ENCODE measurements at regions of chr12 and their contacts with region 1.

Region 1: GRCh38 chr12:9707864-9708808 is 24.8 kb downstream of the CLECL1 start:
- DNase-seq: peak; percentile 35 to 79 (median 72)
- ATAC-seq: peak; percentile 92
- H3K4me3 ChIP-seq: peak overlapping the region; percentile 46
- H3K4me3 Mint-ChIP-seq: peak overlapping the region; percentile 56 to 82 (median 73)
- H3K27ac ChIP-seq: peak overlapping the region; percentile 66
- H3K27ac Mint-ChIP-seq: peak overlapping the region; percentile 80 to 98 (median 95)
- H3K4me1 ChIP-seq: peaks cover 30 to 31% of the 10 kb centered on the region in 2 donors
- H3K4me1 Mint-ChIP-seq: peaks cover 34 to 86% (median 81%) of the 10 kb centered on the region in 7 donors
- H3K27me3 ChIP-seq: no peaks in the 10 kb centered on the region
- H3K27me3 Mint-ChIP-seq: no peaks in the 10 kb centered on the region

Region 2: GRCh38 chr12:9464408-9464807 is 243.7 kb before region 1 on chr12:
- CTCF ChIA-PET with region 1: interaction called, 4 read pairs
- POLR2A ChIA-PET with region 1: no interaction called
- intact Hi-C with region 1: loop called in 1 of 2 experiments (anchors 10 kb)
- DNase-seq: no peak
- ATAC-seq: no peak
- H3K4me3 ChIP-seq: no peak overlapping the region
- H3K4me3 Mint-ChIP-seq: no peak overlapping the region
- H3K27ac ChIP-seq: no peak overlapping the region
- H3K27ac Mint-ChIP-seq: no peak overlapping the region
- H3K4me1 ChIP-seq: no peaks in the 10 kb centered on the region
- H3K4me1 Mint-ChIP-seq: peaks cover 0 to 14% (median 9%) of the 10 kb centered on the region in 7 donors
- H3K27me3 ChIP-seq: no peaks in the 10 kb centered on the region
- H3K27me3 Mint-ChIP-seq: peaks cover 0 to 6% (median 0%) of the 10 kb centered on the region in 5 donors

Region 3: DNA sequence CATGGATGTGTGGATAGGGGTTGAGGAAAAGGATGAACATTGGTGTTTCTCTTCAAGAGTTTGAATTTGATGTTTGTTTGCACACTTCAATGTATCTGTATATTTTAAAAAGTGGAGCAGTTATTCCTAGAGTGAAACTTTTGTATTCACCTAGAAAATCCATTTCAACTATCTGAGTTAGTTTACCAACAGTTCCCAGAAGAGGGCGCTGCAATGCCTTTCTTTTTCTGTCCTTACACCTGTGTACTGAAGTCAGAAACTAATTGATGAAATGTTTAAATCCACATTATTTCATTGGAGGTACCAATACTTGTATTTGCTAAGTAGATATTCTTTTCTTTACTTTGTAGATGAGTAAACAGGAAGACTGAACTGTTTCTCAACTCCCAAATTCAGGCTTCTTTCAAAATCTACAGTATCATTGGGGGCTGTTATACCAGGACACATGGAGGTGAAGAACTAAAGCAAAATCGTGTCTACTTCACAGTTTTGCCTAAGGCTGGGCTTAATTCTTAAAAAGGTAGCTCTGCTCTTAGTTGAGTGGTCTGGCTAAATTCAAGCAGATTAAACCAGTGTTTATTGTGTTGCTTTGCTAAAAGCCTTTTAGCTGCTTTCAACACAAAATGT is 73.8 kb before region 1 on chr12:
- CTCF ChIA-PET with region 1: interaction called, 89 read pairs
- POLR2A ChIA-PET with region 1: interaction called, 46 read pairs
- intact Hi-C with region 1: loop called (anchors 1 kb)
- DNase-seq: peak; percentile 45 to 84 (median 75)
- ATAC-seq: peak; percentile 90
- H3K4me3 ChIP-seq: no peak overlapping the region
- H3K4me3 Mint-ChIP-seq: peak overlapping the region in 9 of 10 donors; percentile 15 to 78 (median 73)
- H3K27ac ChIP-seq: peak overlapping the region; percentile 40
- H3K27ac Mint-ChIP-seq: peak overlapping the region; percentile 78 to 97 (median 91)
- H3K4me1 ChIP-seq: peaks cover 23 to 33% of the 10 kb centered on the region in 2 donors
- H3K4me1 Mint-ChIP-seq: peaks cover 24 to 80% (median 66%) of the 10 kb centered on the region in 7 donors
- H3K27me3 ChIP-seq: no peaks in the 10 kb centered on the region
- H3K27me3 Mint-ChIP-seq: peaks cover 0 to 20% (median 0%) of the 10 kb centered on the region in 5 donors

Region 4: GRCh38 chr12:9647825-9648700 is 60.1 kb before region 1 on chr12:
- CTCF ChIA-PET with region 1: interaction called, 15 read pairs
- POLR2A ChIA-PET with region 1: interaction called, 104 read pairs
- intact Hi-C with region 1: loop called (anchors 1 kb)
- DNase-seq: peak; percentile 77 to 97 (median 92)
- ATAC-seq: peak; percentile 81
- H3K4me3 ChIP-seq: peak overlapping the region; percentile 67
- H3K4me3 Mint-ChIP-seq: peak overlapping the region; percentile 93 to 100 (median 98)
- H3K27ac ChIP-seq: peak overlapping the region; percentile 92
- H3K27ac Mint-ChIP-seq: peak overlapping the region; percentile 92 to 100 (median 98)
- H3K4me1 ChIP-seq: peaks cover 29 to 42% of the 10 kb centered on the region in 2 donors
- H3K4me1 Mint-ChIP-seq: peaks cover 32 to 65% (median 60%) of the 10 kb centered on the region in 7 donors
- H3K27me3 ChIP-seq: no peaks in the 10 kb centered on the region
- H3K27me3 Mint-ChIP-seq: peaks cover 0 to 5% (median 0%) of the 10 kb centered on the region in 5 donors

Region 5: DNA sequence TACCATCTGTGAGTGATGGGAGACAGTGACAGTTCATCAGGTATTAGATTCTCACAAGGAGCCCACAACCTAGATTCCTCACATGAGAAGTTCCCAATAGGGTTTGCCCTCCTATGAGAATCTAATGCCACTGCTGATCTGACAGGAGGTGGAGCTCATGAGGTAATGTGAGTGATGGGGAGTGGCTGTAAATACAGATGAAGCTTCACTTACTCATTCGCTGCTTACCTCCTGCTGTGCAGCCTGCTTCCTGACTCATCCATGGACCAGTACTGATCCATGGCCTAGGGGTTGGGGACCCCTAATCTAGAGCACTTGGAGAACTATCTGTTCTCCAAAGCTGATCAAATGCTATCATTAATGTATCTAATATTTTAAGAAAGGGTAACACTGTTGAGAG is 20.9 kb before region 1 on chr12:
- CTCF ChIA-PET with region 1: interaction called, 6 read pairs
- POLR2A ChIA-PET with region 1: interaction called, 16 read pairs
- intact Hi-C with region 1: no loop called
- DNase-seq: no peak
- ATAC-seq: no peak
- H3K4me3 ChIP-seq: no peak overlapping the region
- H3K4me3 Mint-ChIP-seq: peak overlapping the region in 8 of 10 donors; percentile 21 to 89 (median 34)
- H3K27ac ChIP-seq: peak overlapping the region; percentile 40
- H3K27ac Mint-ChIP-seq: peak overlapping the region in 7 of 9 donors; percentile 5 to 83 (median 67)
- H3K4me1 ChIP-seq: peaks cover 26 to 41% of the 10 kb centered on the region in 2 donors
- H3K4me1 Mint-ChIP-seq: peaks cover 34 to 89% (median 77%) of the 10 kb centered on the region in 7 donors
- H3K27me3 ChIP-seq: no peaks in the 10 kb centered on the region
- H3K27me3 Mint-ChIP-seq: no peaks in the 10 kb centered on the region

Region 6: DNA sequence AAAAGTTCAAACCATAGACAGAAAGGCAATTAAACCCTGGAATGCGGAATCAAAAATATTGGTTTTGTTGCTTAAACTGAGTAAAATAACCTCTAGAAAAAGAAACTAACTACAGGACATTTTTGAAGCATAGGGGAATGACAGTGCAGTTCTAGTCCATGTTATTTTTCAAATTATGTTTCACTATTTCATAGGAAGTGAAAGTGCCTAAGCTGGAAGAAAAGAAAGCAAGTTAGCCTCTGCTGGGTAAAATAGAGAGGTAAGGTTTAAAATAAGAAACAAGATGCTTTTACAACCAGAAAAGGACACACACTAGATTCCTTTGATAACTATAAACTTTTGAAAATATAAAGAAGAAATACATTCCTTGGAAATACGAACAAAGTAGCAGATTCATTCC is 23.7 kb after region 1 on chr12:
- CTCF ChIA-PET with region 1: interaction called, 5 read pairs
- POLR2A ChIA-PET with region 1: interaction called, 4 read pairs
- intact Hi-C with region 1: loop called in 1 of 2 experiments (anchors 2 kb)
- DNase-seq: no peak
- ATAC-seq: peak; percentile 63
- H3K4me3 ChIP-seq: no peak overlapping the region
- H3K4me3 Mint-ChIP-seq: peak overlapping the region in 1 of 10 donors; percentile 74
- H3K27ac ChIP-seq: no peak overlapping the region
- H3K27ac Mint-ChIP-seq: peak overlapping the region in 3 of 9 donors; percentile 4 to 85 (median 41)
- H3K4me1 ChIP-seq: peaks cover 0 to 3% of the 10 kb centered on the region in 2 donors
- H3K4me1 Mint-ChIP-seq: peaks cover 7 to 55% (median 31%) of the 10 kb centered on the region in 7 donors
- H3K27me3 ChIP-seq: no peaks in the 10 kb centered on the region
- H3K27me3 Mint-ChIP-seq: no peaks in the 10 kb centered on the region

Measured in naive thymus-derived CD4-positive, alpha-beta T cell (primary cell).